ENCODE measurements at regions of chr11 and their contacts with region 1.

Region 1: DNA sequence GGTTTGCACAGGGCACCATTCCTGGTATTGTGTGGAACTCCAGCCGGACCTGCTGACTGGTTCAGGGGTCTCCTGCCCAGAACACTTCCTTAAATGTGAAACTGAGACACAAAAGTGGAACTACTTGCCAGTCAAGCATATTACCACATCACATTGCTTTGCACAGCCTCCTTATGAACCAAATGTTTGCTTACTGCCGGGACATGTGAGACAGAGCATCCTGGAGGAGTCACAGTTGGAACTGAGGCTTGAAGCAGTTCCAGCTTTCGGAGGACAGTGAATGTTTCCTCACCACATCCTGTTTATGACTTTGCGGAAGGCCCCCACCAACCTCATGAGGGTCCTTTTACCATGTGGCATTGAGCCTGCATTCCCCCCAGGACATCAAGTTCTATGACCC is 105.8 kb upstream of the ARHGAP42 start:
- DNase-seq: no peak
- ATAC-seq: peak; percentile 21

Region 2: GRCh38 chr11:100687630-100688395 is 106.5 kb after region 1 on chr11:
- intact Hi-C with region 1: loop called (anchors 10 kb)
- DNase-seq: peak; percentile 55
- ATAC-seq: peak; percentile 75